CD8-positive, alpha-beta T cell (primary cell): ENCODE measurements at regions of chrX and their contacts with region 1.

Region 1: GRCh38 chrX:39149761-39150160 is 348.5 kb downstream of the MID1IP1 start:
- DNase-seq: peak; percentile 22 to 72 (median 54)
- ATAC-seq: no peak
- H3K4me3 ChIP-seq: no peak overlapping the region
- H3K4me3 Mint-ChIP-seq: no peak overlapping the region
- H3K27ac ChIP-seq: no peak overlapping the region
- H3K27ac Mint-ChIP-seq: no peak overlapping the region
- H3K4me1 ChIP-seq: no peaks in the 10 kb centered on the region
- H3K4me1 Mint-ChIP-seq: no peaks in the 10 kb centered on the region
- H3K27me3 ChIP-seq: no peaks in the 10 kb centered on the region
- H3K27me3 Mint-ChIP-seq: no peaks in the 10 kb centered on the region
- CTCF ChIP-seq: peak; percentile 54

Region 2: DNA sequence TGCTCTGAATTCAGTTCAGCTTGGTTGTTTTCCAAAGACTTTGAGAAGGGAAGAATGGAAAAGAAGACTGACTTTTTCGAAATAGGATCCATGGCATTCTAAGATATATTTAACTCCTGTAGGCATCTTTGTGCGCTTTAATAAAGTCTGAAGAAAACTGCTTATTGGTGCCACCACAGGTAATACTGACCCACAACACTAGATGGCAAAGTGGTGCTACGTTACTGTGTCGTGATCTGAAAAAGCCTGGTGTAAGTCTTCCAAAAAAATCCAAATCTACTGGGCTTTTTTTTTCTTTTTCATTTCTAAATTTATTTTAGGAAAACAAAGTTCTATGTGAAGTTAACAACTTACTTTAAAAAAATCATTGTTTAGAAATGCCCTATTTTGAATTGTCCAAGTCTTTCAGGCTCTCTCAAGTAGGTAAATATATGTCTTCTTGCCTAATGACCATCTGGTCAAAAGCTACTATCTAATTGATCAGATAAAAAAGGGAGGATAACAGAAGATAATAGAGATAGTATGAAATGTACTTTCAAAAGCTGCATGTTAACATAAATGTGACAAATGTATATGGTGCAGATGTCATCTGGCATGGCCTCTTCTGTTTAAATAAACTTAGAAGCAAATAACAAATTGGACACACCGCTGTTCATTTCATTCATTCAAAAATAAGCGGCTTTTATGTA is 395.5 kb before region 1 on chrX:
- CTCF ChIA-PET with region 1: interaction called, 18 read pairs
- POLR2A ChIA-PET with region 1: interaction called, 3 read pairs
- intact Hi-C with region 1: loop called (anchors 2 kb)
- DNase-seq: peak in 6 of 9 experiments; percentile 4 to 63 (median 17)
- ATAC-seq: no peak
- H3K4me3 ChIP-seq: no peak overlapping the region
- H3K4me3 Mint-ChIP-seq: no peak overlapping the region
- H3K27ac ChIP-seq: no peak overlapping the region
- H3K27ac Mint-ChIP-seq: no peak overlapping the region
- H3K4me1 ChIP-seq: no peaks in the 10 kb centered on the region
- H3K4me1 Mint-ChIP-seq: no peaks in the 10 kb centered on the region
- H3K27me3 ChIP-seq: no peaks in the 10 kb centered on the region
- H3K27me3 Mint-ChIP-seq: no peaks in the 10 kb centered on the region
- CTCF ChIP-seq: peak; percentile 61

Region 3: DNA sequence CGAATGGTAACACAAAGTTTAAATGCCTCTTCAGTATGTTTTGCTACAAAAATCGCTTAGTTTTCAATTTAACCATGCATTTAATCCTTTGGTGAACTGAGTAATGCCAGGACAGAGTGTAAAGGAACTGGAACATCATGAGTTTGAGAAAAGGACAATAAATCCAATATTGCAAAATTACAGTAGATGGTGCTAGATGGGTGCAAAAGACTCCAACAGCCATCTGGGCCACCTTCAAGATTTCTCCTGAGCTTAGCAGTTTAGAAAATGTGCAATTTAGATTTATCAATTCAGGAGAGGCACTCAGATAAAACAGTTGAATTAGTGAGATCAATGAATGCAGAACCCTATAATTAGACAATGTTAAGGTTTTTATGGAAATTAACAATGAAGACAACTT is 381.7 kb before region 1 on chrX:
- CTCF ChIA-PET with region 1: interaction called, 6 read pairs
- POLR2A ChIA-PET with region 1: no interaction called
- intact Hi-C with region 1: loop called (anchors 1 to 2 kb)
- DNase-seq: peak in 3 of 9 experiments; percentile 15 to 49 (median 37)
- ATAC-seq: no peak
- H3K4me3 ChIP-seq: no peak overlapping the region
- H3K4me3 Mint-ChIP-seq: no peak overlapping the region
- H3K27ac ChIP-seq: no peak overlapping the region
- H3K27ac Mint-ChIP-seq: no peak overlapping the region
- H3K4me1 ChIP-seq: no peaks in the 10 kb centered on the region
- H3K4me1 Mint-ChIP-seq: no peaks in the 10 kb centered on the region
- H3K27me3 ChIP-seq: no peaks in the 10 kb centered on the region
- H3K27me3 Mint-ChIP-seq: no peaks in the 10 kb centered on the region
- CTCF ChIP-seq: peak; percentile 37

Region 4: GRCh38 chrX:39163581-39164126 is 13.9 kb after region 1 on chrX:
- CTCF ChIA-PET with region 1: no interaction called
- POLR2A ChIA-PET with region 1: no interaction called
- intact Hi-C with region 1: no loop called
- DNase-seq: no peak
- ATAC-seq: no peak
- H3K4me3 ChIP-seq: no peak overlapping the region
- H3K4me3 Mint-ChIP-seq: no peak overlapping the region
- H3K27ac ChIP-seq: no peak overlapping the region
- H3K27ac Mint-ChIP-seq: no peak overlapping the region
- H3K4me1 ChIP-seq: no peaks in the 10 kb centered on the region
- H3K4me1 Mint-ChIP-seq: peaks cover 9% of the 10 kb centered on the region
- H3K27me3 ChIP-seq: peaks cover 0 to 3% of the 10 kb centered on the region in 2 experiments
- H3K27me3 Mint-ChIP-seq: peaks cover 3% of the 10 kb centered on the region
- CTCF ChIP-seq: no peak